CD4-positive, alpha-beta T cell (primary cell): ENCODE measurements at regions of chr14 and their contacts with region 1.

Region 1: GRCh38 chr14:49862089-49862673 is 9.6 kb upstream of the NEMF start:
- DNase-seq: peak; percentile 74 to 94 (median 84)
- ATAC-seq: peak; percentile 33
- H3K4me3 ChIP-seq: peak overlapping the region; percentile 78
- H3K4me3 Mint-ChIP-seq: no peak overlapping the region
- H3K27ac ChIP-seq: peak overlapping the region; percentile 98
- H3K27ac Mint-ChIP-seq: no peak overlapping the region
- H3K4me1 ChIP-seq: peaks cover 43% of the 10 kb centered on the region
- H3K4me1 Mint-ChIP-seq: peaks cover 13% of the 10 kb centered on the region
- H3K27me3 ChIP-seq: no peaks in the 10 kb centered on the region
- H3K27me3 Mint-ChIP-seq: peaks cover 15% of the 10 kb centered on the region
- CTCF ChIP-seq: peak; percentile 100

Region 2: DNA sequence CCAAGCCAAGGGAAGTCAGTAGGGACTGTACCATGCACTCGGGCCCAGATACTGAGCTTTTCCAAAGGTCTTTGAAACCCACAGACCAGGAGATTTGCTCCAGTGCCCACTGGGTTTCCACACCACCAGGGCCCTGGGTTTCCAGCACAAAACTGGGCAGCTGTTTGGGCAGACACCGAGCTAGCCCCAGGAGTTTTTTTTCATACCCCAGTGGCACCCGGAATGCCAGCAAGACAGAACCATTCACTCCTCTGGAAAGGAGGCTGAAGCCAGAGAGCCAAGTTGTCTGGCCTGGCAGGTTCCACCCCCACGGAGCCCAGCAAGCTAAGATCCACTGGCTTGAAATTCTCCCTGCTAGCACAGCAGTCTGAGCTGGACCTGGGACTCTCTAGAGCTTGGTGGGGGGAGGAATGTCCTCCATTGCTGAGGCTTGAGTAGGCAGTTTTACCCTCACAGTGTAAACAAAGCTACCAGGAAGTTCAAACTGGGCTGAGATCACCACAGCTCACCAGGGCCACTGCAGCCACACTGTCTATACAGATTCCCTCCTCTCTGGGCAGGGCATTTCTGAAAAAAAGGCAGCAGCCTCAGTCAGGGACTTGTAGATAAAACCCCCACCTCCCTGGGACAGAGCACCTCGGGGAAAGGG is 1069.7 kb before region 1 on chr14:
- CTCF ChIA-PET with region 1: no interaction called
- POLR2A ChIA-PET with region 1: no interaction called
- intact Hi-C with region 1: no loop called
- DNase-seq: no peak
- ATAC-seq: no peak
- H3K4me3 ChIP-seq: no peak overlapping the region
- H3K4me3 Mint-ChIP-seq: no peak overlapping the region
- H3K27ac ChIP-seq: no peak overlapping the region
- H3K27ac Mint-ChIP-seq: no peak overlapping the region
- H3K4me1 ChIP-seq: no peaks in the 10 kb centered on the region
- H3K4me1 Mint-ChIP-seq: no peaks in the 10 kb centered on the region
- H3K27me3 ChIP-seq: no peaks in the 10 kb centered on the region
- H3K27me3 Mint-ChIP-seq: no peaks in the 10 kb centered on the region
- CTCF ChIP-seq: no peak

Region 3: DNA sequence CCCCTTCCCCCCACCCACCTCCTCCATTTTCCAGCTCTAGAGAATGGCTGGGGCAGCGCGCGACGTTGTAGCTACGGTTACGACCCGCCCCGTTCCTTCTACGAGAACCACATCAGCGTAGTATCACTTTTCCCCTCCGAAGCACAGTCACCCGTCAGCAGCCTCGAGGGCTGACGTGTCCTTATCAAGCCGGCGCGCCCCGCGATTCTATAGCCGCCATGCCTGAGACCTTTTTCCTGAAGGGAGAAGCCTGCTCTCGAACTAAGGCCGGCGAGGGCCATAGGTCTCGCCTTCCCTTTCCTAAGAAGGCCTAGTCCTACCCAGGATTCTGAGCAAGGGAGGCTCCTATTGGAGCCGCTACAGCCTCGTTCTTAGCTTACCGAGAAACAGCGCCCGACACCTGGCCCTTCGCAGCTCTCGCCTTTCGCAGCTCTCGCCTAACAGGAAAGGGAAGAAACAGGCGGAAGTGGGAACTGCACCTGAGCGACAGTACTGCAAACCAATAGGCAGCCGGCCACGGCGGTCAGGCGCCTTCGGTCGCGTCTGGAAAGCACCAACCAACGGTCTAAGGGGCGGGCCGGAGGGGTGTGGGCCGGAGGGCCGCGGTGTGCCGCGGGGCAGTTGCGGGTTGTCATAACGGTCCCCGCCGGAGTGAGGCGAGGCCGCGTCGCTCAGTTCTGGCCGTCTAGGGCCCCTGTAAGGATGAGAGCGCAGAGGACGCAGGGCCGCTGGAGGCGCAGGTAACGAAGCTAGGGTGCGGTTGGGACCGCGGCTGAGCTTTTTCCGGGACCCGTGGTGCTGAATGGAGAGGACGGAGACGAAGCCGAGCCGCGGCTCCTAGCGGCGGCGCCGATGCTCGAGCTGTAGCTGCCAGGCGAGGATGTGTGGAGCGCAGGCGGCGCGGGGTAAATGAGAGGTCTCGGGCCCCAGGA is 241.7 kb before region 1 on chr14 and contains the starts of genes MGAT2 and RPL36AL:
- CTCF ChIA-PET with region 1: interaction called, 3 read pairs
- POLR2A ChIA-PET with region 1: interaction called, 45 read pairs
- intact Hi-C with region 1: no loop called
- DNase-seq: peak; percentile 84 to 97 (median 91)
- ATAC-seq: peak; percentile 79
- H3K4me3 ChIP-seq: peak within 1 kb of the TSS; percentile 95
- H3K4me3 Mint-ChIP-seq: peak within 1 kb of the TSS; percentile 99
- H3K27ac ChIP-seq: peak within 1 kb of the TSS; percentile 98 to 99
- H3K27ac Mint-ChIP-seq: peak within 1 kb of the TSS; percentile 100
- H3K4me1 ChIP-seq: peaks cover 36% of the 10 kb centered on the region
- H3K4me1 Mint-ChIP-seq: peaks cover 73% of the 10 kb centered on the region
- H3K27me3 ChIP-seq: no peaks in the 10 kb centered on the region
- H3K27me3 Mint-ChIP-seq: no peaks in the 10 kb centered on the region
- CTCF ChIP-seq: peak; percentile 22
- total RNA-seq, gene MGAT2: 15.0 to 15.1 TPM
- total RNA-seq, gene RPL36AL: 339 to 370 TPM

Region 4: GRCh38 chr14:49732896-49733295 is 129.3 kb before region 1 on chr14:
- CTCF ChIA-PET with region 1: no interaction called
- POLR2A ChIA-PET with region 1: no interaction called
- intact Hi-C with region 1: no loop called
- DNase-seq: no peak
- ATAC-seq: no peak
- H3K4me3 ChIP-seq: no peak overlapping the region
- H3K4me3 Mint-ChIP-seq: no peak overlapping the region
- H3K27ac ChIP-seq: no peak overlapping the region
- H3K27ac Mint-ChIP-seq: no peak overlapping the region
- H3K4me1 ChIP-seq: no peaks in the 10 kb centered on the region
- H3K4me1 Mint-ChIP-seq: no peaks in the 10 kb centered on the region
- H3K27me3 ChIP-seq: no peaks in the 10 kb centered on the region
- H3K27me3 Mint-ChIP-seq: no peaks in the 10 kb centered on the region
- CTCF ChIP-seq: no peak

Region 5: GRCh38 chr14:49745191-49745590 is 117.0 kb before region 1 on chr14:
- CTCF ChIA-PET with region 1: no interaction called
- POLR2A ChIA-PET with region 1: no interaction called
- intact Hi-C with region 1: no loop called
- DNase-seq: no peak
- ATAC-seq: no peak
- H3K4me3 ChIP-seq: no peak overlapping the region
- H3K4me3 Mint-ChIP-seq: no peak overlapping the region
- H3K27ac ChIP-seq: no peak overlapping the region
- H3K27ac Mint-ChIP-seq: no peak overlapping the region
- H3K4me1 ChIP-seq: no peaks in the 10 kb centered on the region
- H3K4me1 Mint-ChIP-seq: no peaks in the 10 kb centered on the region
- H3K27me3 ChIP-seq: no peaks in the 10 kb centered on the region
- H3K27me3 Mint-ChIP-seq: no peaks in the 10 kb centered on the region
- CTCF ChIP-seq: no peak

Region 6: DNA sequence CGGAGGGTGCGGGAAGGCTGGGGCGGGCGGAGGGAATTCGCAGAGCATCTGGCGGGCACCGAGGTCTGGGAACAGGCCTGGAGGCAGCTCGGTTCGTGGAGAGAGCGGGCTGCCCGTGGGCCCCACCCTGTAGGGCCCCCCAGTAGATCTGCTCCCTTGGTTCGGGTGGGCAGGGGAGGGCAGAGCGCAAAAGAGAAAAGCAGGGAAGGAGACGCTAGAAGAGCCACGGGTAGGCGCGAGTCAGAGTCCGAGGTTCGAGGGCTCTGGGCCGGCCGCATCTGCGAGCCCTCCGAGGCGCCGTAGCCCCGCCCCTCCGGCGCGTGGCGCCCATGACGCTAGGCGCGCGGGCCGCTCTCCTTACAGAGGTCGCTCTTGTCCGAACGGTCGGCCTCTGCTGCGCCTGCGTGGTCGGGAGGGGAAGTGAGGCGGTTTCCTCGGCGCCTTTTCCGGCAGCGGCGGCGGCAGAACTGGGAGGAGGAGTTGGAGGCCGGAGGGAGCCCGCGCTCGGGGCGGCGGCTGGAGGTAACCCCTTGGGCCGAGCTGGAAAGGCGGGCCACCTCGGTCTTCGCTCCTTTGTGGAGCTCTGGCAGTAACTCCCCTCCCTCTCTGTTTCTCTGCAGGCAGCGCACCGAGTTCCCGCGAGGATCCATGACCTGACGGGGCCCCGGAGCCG is 30.6 kb after region 1 on chr14 and contains the start of gene ARF6:
- CTCF ChIA-PET with region 1: interaction called, 14 read pairs
- POLR2A ChIA-PET with region 1: interaction called, 73 read pairs
- intact Hi-C with region 1: loop called in 1 of 2 experiments (anchors 2 kb)
- DNase-seq: peak; percentile 86 to 98 (median 96)
- ATAC-seq: peak; percentile 69
- H3K4me3 ChIP-seq: peak within 1 kb of the TSS; percentile 96
- H3K4me3 Mint-ChIP-seq: peak within 1 kb of the TSS; percentile 98
- H3K27ac ChIP-seq: peak within 1 kb of the TSS; percentile 93 to 99
- H3K27ac Mint-ChIP-seq: peak within 1 kb of the TSS; percentile 96
- H3K4me1 ChIP-seq: peaks cover 19% of the 10 kb centered on the region
- H3K4me1 Mint-ChIP-seq: peaks cover 43% of the 10 kb centered on the region
- H3K27me3 ChIP-seq: no peaks in the 10 kb centered on the region
- H3K27me3 Mint-ChIP-seq: no peaks in the 10 kb centered on the region
- CTCF ChIP-seq: no peak
- total RNA-seq, gene ARF6: 67.2 to 69.7 TPM

Region 7: GRCh38 chr14:49977126-49977841 is 115.1 kb after region 1 on chr14:
- CTCF ChIA-PET with region 1: interaction called, 11 read pairs
- POLR2A ChIA-PET with region 1: interaction called, 86 read pairs
- intact Hi-C with region 1: no loop called
- DNase-seq: peak in 9 of 14 experiments; percentile 12 to 83 (median 40)
- ATAC-seq: peak; percentile 86
- H3K4me3 ChIP-seq: peak overlapping the region; percentile 41
- H3K4me3 Mint-ChIP-seq: peak overlapping the region; percentile 74
- H3K27ac ChIP-seq: peak overlapping the region; percentile 67 to 85
- H3K27ac Mint-ChIP-seq: peak overlapping the region; percentile 90
- H3K4me1 ChIP-seq: peaks cover 94% of the 10 kb centered on the region
- H3K4me1 Mint-ChIP-seq: peaks cover 83% of the 10 kb centered on the region
- H3K27me3 ChIP-seq: no peaks in the 10 kb centered on the region
- H3K27me3 Mint-ChIP-seq: no peaks in the 10 kb centered on the region
- CTCF ChIP-seq: no peak

Region 8: DNA sequence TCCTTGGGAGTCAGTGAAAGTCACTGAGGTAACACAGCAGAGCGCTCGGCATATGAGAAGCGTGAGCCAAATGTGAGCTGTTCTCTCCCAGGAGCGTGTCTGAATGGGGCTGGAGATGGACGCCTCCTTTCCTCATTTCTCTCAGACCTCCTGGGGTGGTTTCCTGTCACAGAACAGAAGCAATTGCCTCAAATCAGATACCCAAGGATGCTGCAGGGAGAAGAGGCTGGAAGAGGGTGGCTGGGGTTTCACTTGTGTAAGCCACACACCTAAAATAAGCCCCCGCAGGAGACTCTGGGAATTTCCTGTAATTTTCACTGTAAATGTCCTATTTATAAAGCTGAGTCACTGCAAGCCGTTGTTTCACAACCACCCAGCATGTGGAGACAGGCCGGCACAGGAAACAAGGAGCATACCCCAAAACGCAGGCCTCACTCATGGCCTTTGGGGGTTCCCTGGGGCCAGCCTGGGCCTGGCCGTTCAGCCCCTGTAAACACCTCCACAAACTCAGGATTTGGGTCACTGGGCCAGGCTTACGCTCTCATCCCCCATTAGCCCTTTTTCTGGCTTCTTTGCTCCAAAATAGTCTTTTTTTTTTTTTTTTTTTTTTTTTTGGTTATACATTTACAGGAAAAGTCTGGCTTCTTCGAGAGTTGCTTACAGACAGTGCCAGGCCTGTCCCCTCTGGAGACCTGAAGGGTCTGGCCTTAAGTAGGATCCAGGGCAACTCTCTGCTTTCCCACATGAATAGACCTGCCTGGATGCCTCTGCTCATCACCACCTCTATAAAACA is 198.9 kb after region 1 on chr14:
- CTCF ChIA-PET with region 1: interaction called, 33 read pairs
- POLR2A ChIA-PET with region 1: interaction called, 155 read pairs
- intact Hi-C with region 1: loop called (anchors 2 to 5 kb)
- DNase-seq: peak in 6 of 14 experiments; percentile 17 to 79 (median 57)
- ATAC-seq: no peak
- H3K4me3 ChIP-seq: peak overlapping the region; percentile 48
- H3K4me3 Mint-ChIP-seq: peak overlapping the region; percentile 70
- H3K27ac ChIP-seq: peak overlapping the region; percentile 89 to 94
- H3K27ac Mint-ChIP-seq: peak overlapping the region; percentile 91
- H3K4me1 ChIP-seq: peaks cover 73% of the 10 kb centered on the region
- H3K4me1 Mint-ChIP-seq: peaks cover 73% of the 10 kb centered on the region
- H3K27me3 ChIP-seq: no peaks in the 10 kb centered on the region
- H3K27me3 Mint-ChIP-seq: no peaks in the 10 kb centered on the region
- CTCF ChIP-seq: no peak

Region 9: GRCh38 chr14:50116181-50116956 is 254.2 kb after region 1 on chr14 and contains the start of gene VCPKMT:
- CTCF ChIA-PET with region 1: interaction called, 40 read pairs
- POLR2A ChIA-PET with region 1: interaction called, 77 read pairs
- intact Hi-C with region 1: loop called in 1 of 2 experiments (anchors 1 kb)
- DNase-seq: peak; percentile 90 to 98 (median 96)
- ATAC-seq: peak; percentile 98
- H3K4me3 ChIP-seq: peak within 1 kb of the TSS; percentile 75
- H3K4me3 Mint-ChIP-seq: peak within 1 kb of the TSS; percentile 99
- H3K27ac ChIP-seq: peak within 1 kb of the TSS; percentile 81 to 95
- H3K27ac Mint-ChIP-seq: peak within 1 kb of the TSS; percentile 99
- H3K4me1 ChIP-seq: peaks cover 15% of the 10 kb centered on the region
- H3K4me1 Mint-ChIP-seq: peaks cover 31% of the 10 kb centered on the region
- H3K27me3 ChIP-seq: no peaks in the 10 kb centered on the region
- H3K27me3 Mint-ChIP-seq: no peaks in the 10 kb centered on the region
- CTCF ChIP-seq: no peak
- total RNA-seq, gene VCPKMT: 30.4 to 32.4 TPM